ENCODE measurements at regions of chr6 and their contacts with region 1.

Region 1: GRCh38 chr6:4805553-4806336 is 29.5 kb downstream of the CDYL start:
- DNase-seq: peak; percentile 22
- H3K4me3 ChIP-seq: no peak overlapping the region
- H3K27ac ChIP-seq: no peak overlapping the region
- H3K4me1 ChIP-seq: peaks cover 31% of the 10 kb centered on the region
- CTCF ChIP-seq: peak; percentile 75

Region 2: GRCh38 chr6:4210629-4211423 is 594.9 kb before region 1 on chr6:
- CTCF ChIA-PET with region 1: no interaction called
- POLR2A ChIA-PET with region 1: no interaction called
- intact Hi-C with region 1: no loop called
- DNase-seq: peak; percentile 64
- H3K4me3 ChIP-seq: no peak overlapping the region
- H3K27ac ChIP-seq: no peak overlapping the region
- H3K4me1 ChIP-seq: peaks cover 8% of the 10 kb centered on the region
- CTCF ChIP-seq: peak; percentile 81

Region 3: DNA sequence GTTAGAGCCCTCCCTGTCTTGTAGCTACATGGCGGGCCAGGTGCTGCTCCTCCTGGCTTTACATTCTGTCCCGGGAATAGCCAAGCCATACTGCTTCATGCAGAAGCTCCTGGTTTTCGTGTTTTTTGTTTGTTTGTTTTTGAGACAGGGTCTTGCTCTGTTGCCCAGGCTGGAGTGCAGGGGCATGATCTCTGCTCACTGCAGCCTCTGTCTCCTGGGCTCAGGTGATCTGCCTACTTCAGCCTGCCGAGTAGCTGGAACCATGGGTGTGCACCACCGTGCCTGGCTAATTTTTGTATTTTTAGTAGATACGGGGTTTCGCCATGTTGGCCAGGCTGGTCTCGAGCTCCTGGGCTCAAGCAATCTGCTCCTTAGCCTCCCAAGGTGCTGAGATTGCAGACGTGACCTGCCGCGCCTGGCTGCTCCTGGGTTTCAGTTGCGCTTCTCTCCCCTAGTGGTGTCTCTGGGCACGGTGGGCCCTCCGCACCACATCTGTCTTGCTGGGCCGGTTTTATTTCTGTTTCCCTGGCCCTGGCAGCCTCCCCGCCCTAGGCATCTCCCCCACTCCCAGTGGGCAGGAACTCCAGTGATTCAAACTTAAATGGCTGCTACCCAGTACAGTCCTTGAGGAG is 16.7 kb before region 1 on chr6:
- CTCF ChIA-PET with region 1: interaction called, 8 read pairs
- POLR2A ChIA-PET with region 1: interaction called, 11 read pairs
- intact Hi-C with region 1: no loop called
- DNase-seq: peak; percentile 79
- H3K4me3 ChIP-seq: peak overlapping the region; percentile 27
- H3K27ac ChIP-seq: peak overlapping the region; percentile 33
- H3K4me1 ChIP-seq: peaks cover 24% of the 10 kb centered on the region
- CTCF ChIP-seq: peak; percentile 60

Region 4: DNA sequence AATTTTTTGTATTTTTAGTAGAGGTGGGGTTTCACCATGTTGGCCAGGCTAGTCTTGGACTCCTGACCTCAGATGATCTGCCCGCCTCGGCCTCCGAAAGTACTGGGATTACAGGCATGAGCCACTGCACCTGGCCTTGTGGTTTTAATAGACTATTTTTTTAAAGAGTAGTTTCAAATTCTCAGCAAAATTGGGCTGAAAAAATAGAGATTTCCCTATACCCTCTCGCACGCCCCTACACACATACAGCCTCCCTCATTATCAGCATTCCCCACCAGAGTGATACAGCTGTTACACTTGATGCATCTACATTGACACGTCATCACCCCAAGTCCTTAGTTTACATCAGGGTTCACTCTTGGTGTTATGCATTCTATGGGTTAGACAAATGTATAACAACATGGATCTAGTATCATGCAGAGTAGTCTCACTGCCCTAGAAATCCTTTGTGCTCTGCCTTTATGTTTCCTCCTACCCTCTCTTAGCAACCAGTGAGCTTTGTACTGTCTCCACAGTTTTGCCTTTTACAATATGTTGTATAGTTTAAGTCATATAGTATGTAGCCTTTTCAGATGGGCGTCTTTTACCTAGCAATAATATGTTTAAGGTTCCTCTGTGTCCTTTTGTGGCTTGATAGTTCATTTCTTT is 74.1 kb after region 1 on chr6:
- CTCF ChIA-PET with region 1: no interaction called
- POLR2A ChIA-PET with region 1: interaction called, 4 read pairs
- intact Hi-C with region 1: loop called (anchors 5 kb)
- DNase-seq: peak; percentile 67
- H3K4me3 ChIP-seq: peak overlapping the region; percentile 60
- H3K27ac ChIP-seq: peak overlapping the region; percentile 76
- H3K4me1 ChIP-seq: peaks cover 75% of the 10 kb centered on the region
- CTCF ChIP-seq: no peak

Region 5: DNA sequence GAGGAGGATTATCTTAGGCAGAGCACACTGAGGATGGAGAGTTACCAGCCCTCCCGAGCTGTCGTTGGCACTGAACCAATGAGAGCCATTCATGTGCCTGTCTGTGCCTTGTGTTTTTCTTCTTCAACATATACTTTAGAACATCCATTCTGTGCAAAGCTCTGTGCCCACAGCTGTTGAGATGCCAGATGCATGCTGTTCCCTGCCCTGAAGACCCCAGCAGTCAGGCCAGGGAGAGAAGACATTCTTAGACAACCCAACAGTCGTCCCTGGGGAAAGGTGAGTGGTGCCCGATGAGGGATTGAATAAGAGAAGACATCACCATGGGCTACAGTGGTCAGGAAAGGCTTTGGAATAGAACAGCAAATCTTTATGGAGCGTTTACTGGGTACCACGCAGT is 1086.9 kb after region 1 on chr6:
- CTCF ChIA-PET with region 1: no interaction called
- POLR2A ChIA-PET with region 1: no interaction called
- intact Hi-C with region 1: no loop called
- DNase-seq: no peak
- H3K4me3 ChIP-seq: no peak overlapping the region
- H3K27ac ChIP-seq: no peak overlapping the region
- H3K4me1 ChIP-seq: no peaks in the 10 kb centered on the region
- CTCF ChIP-seq: no peak